ENCODE measurements at regions of chr19 and their contacts with region 1.

Region 1: DNA sequence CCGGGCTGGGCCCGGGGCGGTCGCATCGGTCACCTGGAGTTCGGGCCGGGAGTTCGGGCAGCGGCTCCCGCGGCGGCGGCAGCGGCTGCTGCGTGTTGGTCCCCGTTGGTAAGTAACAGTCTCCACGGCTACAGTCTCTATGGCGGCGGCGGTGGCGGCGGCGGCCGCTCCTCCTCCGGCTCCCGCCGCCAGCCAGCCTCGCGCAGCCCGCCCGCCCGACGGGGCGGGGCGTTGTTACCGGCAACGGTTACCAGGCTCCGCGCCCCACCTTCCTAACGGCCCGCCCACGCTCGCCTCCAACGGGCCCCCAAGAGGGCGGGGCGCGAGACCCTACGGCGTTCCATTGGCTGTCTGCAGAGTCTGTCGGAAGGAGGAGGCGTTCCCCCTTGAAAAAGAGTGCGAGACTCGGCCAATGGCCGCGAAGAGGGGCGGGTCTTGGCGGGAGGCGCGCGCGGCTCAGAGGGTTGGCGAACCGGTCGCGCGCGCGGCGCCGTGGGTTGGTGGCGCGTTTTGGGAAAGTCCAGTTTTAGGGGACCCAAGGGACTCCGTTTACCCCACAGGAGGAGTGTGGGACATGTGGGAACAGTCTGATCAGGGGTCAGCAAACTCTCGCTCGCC is at the start of gene RFX2:
- DNase-seq: peak; percentile 99
- H3K4me3 Mint-ChIP-seq: peak within 1 kb of the TSS; percentile 80
- H3K27ac Mint-ChIP-seq: peak within 1 kb of the TSS; percentile 82
- H3K4me1 Mint-ChIP-seq: peaks cover 22% of the 10 kb centered on the region
- H3K27me3 Mint-ChIP-seq: peaks cover 3% of the 10 kb centered on the region
- total RNA-seq, gene RFX2: 4.7 to 6.0 TPM

Region 2: DNA sequence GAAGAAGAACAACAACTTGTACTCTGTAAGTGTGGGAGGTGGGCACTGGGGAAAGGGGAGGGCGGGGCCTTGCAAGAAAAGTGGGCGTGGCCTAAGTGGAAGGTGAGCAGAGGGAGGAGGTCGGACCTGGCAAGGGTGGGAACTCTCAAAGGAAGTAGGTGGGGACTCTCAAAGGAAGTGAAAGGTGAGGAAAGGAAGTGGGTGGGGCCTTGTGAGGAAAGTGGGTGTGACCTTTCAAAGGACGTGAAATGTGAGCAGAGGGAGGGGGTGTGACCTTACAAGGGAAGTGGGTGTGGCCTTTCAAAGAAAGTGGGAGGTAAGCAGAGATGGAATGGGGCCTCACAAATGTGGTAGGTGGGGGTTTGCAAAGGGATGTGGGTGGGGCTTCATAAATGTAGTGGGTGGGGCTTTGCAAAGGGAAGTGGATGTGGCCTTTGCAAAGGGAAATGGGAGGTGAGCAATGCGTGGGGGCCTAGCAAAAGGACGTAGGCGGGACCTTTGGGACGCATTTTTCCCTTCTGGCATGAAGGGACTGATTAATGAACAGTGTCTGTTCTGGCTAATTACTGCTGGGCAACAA is 50.9 kb after region 1 on chr19:
- CTCF ChIA-PET with region 1: no interaction called
- intact Hi-C with region 1: loop called (anchors 2 kb)
- DNase-seq: peak; percentile 76
- H3K4me3 Mint-ChIP-seq: no peak overlapping the region
- H3K27ac Mint-ChIP-seq: peak overlapping the region; percentile 21
- H3K4me1 Mint-ChIP-seq: peaks cover 7% of the 10 kb centered on the region
- H3K27me3 Mint-ChIP-seq: no peaks in the 10 kb centered on the region